ENCODE measurements at regions of chr12 and their contacts with region 1.

Region 1: DNA sequence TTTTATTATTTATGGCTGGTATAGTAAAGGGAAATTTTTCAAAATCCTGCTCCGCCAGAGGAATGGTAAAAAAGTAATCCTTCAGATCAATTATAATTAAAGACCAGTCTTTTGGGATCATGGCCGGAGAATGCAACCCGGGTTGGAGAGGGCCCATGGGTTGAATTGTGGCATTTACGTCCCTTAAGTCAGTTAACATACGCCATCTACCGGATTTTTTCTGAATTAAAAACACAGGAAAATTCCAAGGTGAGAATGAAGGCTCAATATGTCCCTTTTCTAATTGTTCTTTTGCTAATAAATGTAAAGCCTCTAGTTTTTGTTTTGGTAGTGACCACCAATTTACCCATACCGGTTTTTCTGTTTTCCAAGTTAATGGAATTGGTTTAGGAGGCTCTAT is 602.8 kb downstream of the ALG10 start:
- DNase-seq: no peak
- H3K4me3 Mint-ChIP-seq: no peak overlapping the region
- H3K27ac Mint-ChIP-seq: no peak overlapping the region
- H3K4me1 Mint-ChIP-seq: no peaks in the 10 kb centered on the region
- H3K27me3 Mint-ChIP-seq: no peaks in the 10 kb centered on the region

Region 2: GRCh38 chr12:34289431-34290380 is 335.4 kb before region 1 on chr12:
- intact Hi-C with region 1: loop called (anchors 10 kb)
- DNase-seq: no peak
- H3K4me3 Mint-ChIP-seq: no peak overlapping the region
- H3K27ac Mint-ChIP-seq: no peak overlapping the region
- H3K4me1 Mint-ChIP-seq: no peaks in the 10 kb centered on the region
- H3K27me3 Mint-ChIP-seq: no peaks in the 10 kb centered on the region